Activated naive CD8-positive, alpha-beta T cell treated with anti-CD3 and anti-CD28 coated beads, Interleukin-2, amount 10 ng/mL, durations not matched to agents 7 days and 5 days (primary cell): ENCODE measurements at regions of chr2 and their contacts with region 1.

Region 1: GRCh38 chr2:70086838-70087701 is at the start of gene PCBP1:
- DNase-seq: peak; percentile 99
- ATAC-seq: peak; percentile 34
- H3K4me3 Mint-ChIP-seq: peak within 1 kb of the TSS; percentile 96
- H3K27ac Mint-ChIP-seq: peak within 1 kb of the TSS; percentile 98
- H3K4me1 Mint-ChIP-seq: peaks cover 47% of the 10 kb centered on the region
- H3K27me3 Mint-ChIP-seq: no peaks in the 10 kb centered on the region
- total RNA-seq, gene PCBP1: 459 to 467 TPM

Region 2: DNA sequence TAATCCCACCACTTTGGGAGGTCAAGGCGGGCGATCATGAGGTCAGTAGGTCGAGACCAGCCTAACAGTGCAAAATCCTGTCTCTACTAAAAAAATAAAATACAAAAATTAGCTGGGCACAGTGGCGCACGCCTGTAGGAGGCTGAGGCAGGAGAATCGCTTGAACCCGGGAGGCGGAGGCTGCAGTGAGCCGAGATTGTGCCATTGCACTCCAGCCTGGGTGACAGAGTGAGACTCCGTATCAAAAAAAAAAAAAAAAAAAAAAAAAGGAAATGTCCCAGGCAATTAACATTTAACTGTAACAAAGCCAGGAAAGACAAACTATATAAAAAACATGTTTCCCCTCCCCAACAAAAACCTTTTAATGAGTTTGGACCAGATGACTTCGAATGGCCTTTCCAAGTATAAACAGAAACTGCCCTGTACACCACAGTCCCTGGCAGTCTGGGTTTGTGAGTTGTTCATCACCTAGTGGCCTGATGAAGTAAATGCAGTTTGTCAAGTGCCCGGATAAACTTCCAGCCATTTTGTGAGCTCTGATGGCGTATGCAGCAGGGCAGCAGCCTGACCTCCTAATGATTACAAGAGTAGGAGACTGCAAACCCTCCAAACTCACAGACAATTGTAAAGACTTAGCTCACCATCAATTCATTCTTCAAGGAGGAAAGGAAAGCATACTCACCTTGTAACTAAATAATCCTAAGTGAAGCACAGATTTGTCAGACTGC is 16.4 kb before region 1 on chr2:
- POLR2A ChIA-PET with region 1: interaction called, 90 read pairs
- DNase-seq: no peak
- ATAC-seq: peak; percentile 76
- H3K4me3 Mint-ChIP-seq: peak overlapping the region; percentile 77
- H3K27ac Mint-ChIP-seq: peak overlapping the region; percentile 96
- H3K4me1 Mint-ChIP-seq: peaks cover 40% of the 10 kb centered on the region
- H3K27me3 Mint-ChIP-seq: no peaks in the 10 kb centered on the region

Region 3: DNA sequence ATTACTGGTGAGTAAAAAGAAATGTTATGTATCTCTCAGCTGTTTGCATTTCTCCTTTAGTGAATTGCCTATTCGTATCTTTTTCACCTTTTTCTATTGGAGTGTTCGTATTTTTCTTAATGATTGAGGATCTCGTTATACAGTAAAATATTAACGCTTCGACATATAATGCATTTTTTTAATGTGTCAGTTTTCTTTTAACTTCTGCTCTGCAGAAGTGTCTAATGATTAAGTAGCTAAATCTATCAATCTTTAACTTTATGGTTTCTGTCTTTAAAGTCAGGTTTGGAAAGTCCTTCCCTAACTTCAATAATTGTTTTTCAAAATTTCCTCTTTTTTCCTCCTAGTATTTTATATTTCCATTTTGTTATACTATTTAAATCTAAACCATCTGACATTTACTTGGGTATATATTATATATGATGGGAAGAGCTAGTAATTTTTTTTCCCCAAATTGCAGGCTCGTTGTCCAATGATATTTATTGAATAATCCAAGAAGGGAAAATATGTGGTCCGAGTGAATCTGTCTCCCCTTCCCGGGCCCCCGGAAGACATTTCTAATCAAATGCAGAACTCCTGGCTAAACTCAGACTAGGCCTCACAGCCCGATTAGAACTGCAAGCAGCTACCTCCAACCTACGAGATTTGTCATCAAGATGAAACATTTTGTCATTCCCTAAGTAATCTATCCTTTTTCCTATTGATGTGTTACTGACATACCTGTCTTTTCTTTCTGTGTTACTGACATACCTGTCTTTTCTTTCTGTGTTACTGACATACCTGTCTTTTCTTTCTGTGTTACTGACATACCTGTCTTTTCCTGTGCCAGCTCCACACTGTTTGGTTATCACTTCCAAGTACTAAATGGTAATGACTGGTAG is 17.4 kb after region 1 on chr2:
- POLR2A ChIA-PET with region 1: interaction called, 262 read pairs
- DNase-seq: no peak
- ATAC-seq: no peak
- H3K4me3 Mint-ChIP-seq: peak overlapping the region; percentile 85
- H3K27ac Mint-ChIP-seq: peak overlapping the region; percentile 96
- H3K4me1 Mint-ChIP-seq: peaks cover 50% of the 10 kb centered on the region
- H3K27me3 Mint-ChIP-seq: no peaks in the 10 kb centered on the region

Region 4: GRCh38 chr2:70115646-70116442 is 28.8 kb after region 1 on chr2:
- POLR2A ChIA-PET with region 1: interaction called, 262 read pairs
- DNase-seq: no peak
- ATAC-seq: peak; percentile 66
- H3K4me3 Mint-ChIP-seq: peak overlapping the region; percentile 50
- H3K27ac Mint-ChIP-seq: peak overlapping the region; percentile 73
- H3K4me1 Mint-ChIP-seq: peaks cover 34% of the 10 kb centered on the region
- H3K27me3 Mint-ChIP-seq: no peaks in the 10 kb centered on the region

Region 5: DNA sequence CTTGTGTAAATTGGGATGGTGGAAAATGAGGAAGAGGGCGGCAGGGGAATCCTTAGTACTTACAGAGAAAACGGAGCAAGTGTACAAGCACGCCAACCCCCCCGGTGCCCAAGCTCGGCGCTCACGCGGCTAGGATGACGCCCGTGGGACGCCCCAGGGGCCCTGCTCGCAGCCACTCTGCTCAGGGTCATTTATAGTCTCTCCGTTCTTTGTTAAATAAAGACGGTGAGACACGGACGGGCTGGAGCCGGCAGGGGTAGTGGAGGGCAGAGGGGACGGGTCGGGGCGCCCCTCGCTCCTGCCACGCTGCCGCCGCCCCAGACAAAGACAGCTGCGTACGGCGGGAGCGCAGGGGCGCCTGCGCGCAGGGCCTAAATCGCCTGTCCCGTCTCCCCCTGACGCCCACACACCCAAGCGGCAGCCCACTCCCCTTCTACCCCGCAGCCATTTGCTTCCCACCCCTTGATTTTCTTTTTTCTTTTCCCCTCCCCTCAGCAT is 38.0 kb after region 1 on chr2:
- POLR2A ChIA-PET with region 1: interaction called, 444 read pairs
- DNase-seq: peak; percentile 76
- ATAC-seq: peak; percentile 62
- H3K4me3 Mint-ChIP-seq: peak overlapping the region; percentile 85
- H3K27ac Mint-ChIP-seq: peak overlapping the region; percentile 94
- H3K4me1 Mint-ChIP-seq: peaks cover 54% of the 10 kb centered on the region
- H3K27me3 Mint-ChIP-seq: no peaks in the 10 kb centered on the region

Region 6: GRCh38 chr2:70190418-70191243 is 103.6 kb after region 1 on chr2 and contains the start of gene C2orf42:
- POLR2A ChIA-PET with region 1: interaction called, 13 read pairs
- DNase-seq: peak; percentile 93
- ATAC-seq: peak; percentile 85
- H3K4me3 Mint-ChIP-seq: peak within 1 kb of the TSS; percentile 95
- H3K27ac Mint-ChIP-seq: peak within 1 kb of the TSS; percentile 99
- H3K4me1 Mint-ChIP-seq: peaks cover 14% of the 10 kb centered on the region
- H3K27me3 Mint-ChIP-seq: peaks cover 2% of the 10 kb centered on the region
- total RNA-seq, gene C2orf42: 30.9 to 33.8 TPM